Activated CD8-positive, alpha-beta memory T cell treated with anti-CD3 and anti-CD28 coated beads, Interleukin-2, amount 10 ng/mL, durations not matched to agents 7 days and 5 days (primary cell): ENCODE measurements at regions of chr2 and their contacts with region 1.

Region 1: DNA sequence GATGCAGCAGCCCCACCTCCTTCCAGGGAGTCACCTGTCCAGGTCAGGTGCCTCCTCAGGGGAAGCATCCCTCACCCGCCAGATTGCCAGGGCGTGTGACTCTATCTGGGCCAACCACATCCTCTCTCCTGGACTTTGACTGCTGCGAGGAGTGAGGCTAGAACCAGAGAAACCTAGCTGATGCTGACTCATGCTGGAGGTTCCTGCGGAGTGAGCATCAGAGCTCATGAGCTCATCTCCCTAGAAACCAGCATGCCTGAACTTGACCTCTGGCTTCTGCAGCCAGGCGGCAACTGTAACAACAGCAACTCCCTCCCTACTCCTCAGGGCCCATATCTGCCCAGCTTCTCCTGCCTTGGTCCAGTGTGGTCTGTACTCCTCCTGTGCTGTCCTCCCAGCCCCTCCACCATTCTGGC is 28.3 kb upstream of the NT5DC4 start:
- DNase-seq: peak; percentile 92
- ATAC-seq: peak; percentile 92
- H3K4me3 Mint-ChIP-seq: peak overlapping the region; percentile 33
- H3K27ac Mint-ChIP-seq: peak overlapping the region; percentile 95
- H3K4me1 Mint-ChIP-seq: peaks cover 45% of the 10 kb centered on the region
- H3K27me3 Mint-ChIP-seq: no peaks in the 10 kb centered on the region

Region 2: DNA sequence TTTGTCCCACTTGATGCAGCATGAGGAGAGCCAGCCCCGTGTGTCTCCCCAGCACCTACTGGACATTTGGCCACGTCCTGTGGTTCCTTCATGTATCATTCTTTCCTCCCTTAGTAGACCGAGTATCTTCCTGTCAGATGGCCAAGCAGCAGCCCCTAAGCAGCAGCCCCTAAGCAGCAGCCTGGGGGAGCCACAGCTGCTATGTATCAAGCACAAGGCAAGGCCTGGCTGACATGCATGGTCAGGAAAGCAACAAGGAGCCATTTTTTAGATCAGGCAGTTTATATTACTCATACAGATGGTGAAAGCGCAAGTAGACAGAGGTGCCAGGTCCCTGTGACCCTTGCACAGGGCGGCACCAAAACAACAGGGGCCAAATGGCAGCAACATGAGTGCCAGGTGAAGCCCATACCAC is 86.0 kb before region 1 on chr2:
- CTCF ChIA-PET with region 1: interaction called, 55 read pairs
- DNase-seq: no peak
- ATAC-seq: no peak
- H3K4me3 Mint-ChIP-seq: no peak overlapping the region
- H3K27ac Mint-ChIP-seq: no peak overlapping the region
- H3K4me1 Mint-ChIP-seq: peaks cover 2% of the 10 kb centered on the region
- H3K27me3 Mint-ChIP-seq: peaks cover 19% of the 10 kb centered on the region

Region 3: GRCh38 chr2:112706170-112706664 is 13.7 kb after region 1 on chr2:
- CTCF ChIA-PET with region 1: interaction called, 66 read pairs
- DNase-seq: peak; percentile 96
- ATAC-seq: peak; percentile 97
- H3K4me3 Mint-ChIP-seq: peak overlapping the region; percentile 33
- H3K27ac Mint-ChIP-seq: peak overlapping the region; percentile 84
- H3K4me1 Mint-ChIP-seq: peaks cover 66% of the 10 kb centered on the region
- H3K27me3 Mint-ChIP-seq: peaks cover 3% of the 10 kb centered on the region

Region 4: GRCh38 chr2:112737542-112738232 is 45.2 kb after region 1 on chr2:
- CTCF ChIA-PET with region 1: no interaction called
- DNase-seq: no peak
- ATAC-seq: no peak
- H3K4me3 Mint-ChIP-seq: no peak overlapping the region
- H3K27ac Mint-ChIP-seq: no peak overlapping the region
- H3K4me1 Mint-ChIP-seq: no peaks in the 10 kb centered on the region
- H3K27me3 Mint-ChIP-seq: no peaks in the 10 kb centered on the region